ENCODE measurements at regions of chr18 and their contacts with region 1.

Region 1: DNA sequence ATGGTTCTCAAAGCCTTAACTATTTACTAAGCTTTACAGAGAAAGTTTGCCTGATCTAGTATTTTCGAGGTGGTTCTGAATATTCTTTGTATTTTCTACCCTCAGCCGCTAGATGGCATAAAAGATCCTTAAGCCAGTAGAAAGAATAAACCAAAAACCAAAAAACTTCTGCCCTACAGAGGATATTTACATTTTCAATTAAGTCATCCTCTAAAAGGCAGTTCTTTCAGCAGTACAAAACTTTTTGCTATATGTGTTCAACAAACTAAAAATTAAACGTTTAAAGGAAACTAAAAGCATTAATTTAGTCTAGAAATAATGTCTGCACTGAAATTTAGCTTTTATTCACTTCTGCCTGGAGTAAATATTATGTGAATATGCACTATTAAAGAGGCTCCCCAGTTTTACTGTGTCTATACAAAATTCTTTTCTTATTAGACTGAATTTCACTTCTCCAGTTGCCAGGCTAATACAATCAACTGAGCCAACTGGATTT is 297.5 kb downstream of the PIEZO2 start:
- DNase-seq: no peak
- H3K4me3 Mint-ChIP-seq: no peak overlapping the region
- H3K27ac Mint-ChIP-seq: no peak overlapping the region
- H3K4me1 Mint-ChIP-seq: no peaks in the 10 kb centered on the region
- H3K27me3 Mint-ChIP-seq: peaks cover 11% of the 10 kb centered on the region

Region 2: DNA sequence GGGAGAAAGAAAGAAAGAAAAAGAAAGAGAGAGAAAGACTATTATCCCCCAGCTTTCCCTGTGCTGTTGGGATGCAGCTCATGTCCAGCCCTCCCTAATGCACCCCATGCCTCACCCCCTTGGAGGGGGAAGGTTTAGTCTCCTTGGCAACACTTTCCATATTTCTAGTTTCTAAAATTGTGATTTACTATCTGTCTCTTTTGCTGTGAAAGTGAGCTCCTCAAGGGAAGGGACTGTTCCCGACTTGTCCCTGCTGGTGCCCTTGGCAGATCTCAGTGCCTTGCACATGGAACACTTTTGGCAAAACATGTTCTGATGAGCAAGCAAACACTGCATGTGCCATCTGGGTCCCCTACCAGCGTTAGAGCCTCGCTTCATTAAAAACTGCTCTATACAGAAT is 337.8 kb before region 1 on chr18:
- CTCF ChIA-PET with region 1: no interaction called
- POLR2A ChIA-PET with region 1: no interaction called
- intact Hi-C with region 1: no loop called
- DNase-seq: no peak
- H3K4me3 Mint-ChIP-seq: no peak overlapping the region
- H3K27ac Mint-ChIP-seq: no peak overlapping the region
- H3K4me1 Mint-ChIP-seq: no peaks in the 10 kb centered on the region
- H3K27me3 Mint-ChIP-seq: peaks cover 66% of the 10 kb centered on the region

Region 3: GRCh38 chr18:11040823-11041656 is 189.2 kb after region 1 on chr18:
- CTCF ChIA-PET with region 1: interaction called, 17 read pairs
- POLR2A ChIA-PET with region 1: no interaction called
- intact Hi-C with region 1: loop called (anchors 1 kb)
- DNase-seq: peak; percentile 10
- H3K4me3 Mint-ChIP-seq: no peak overlapping the region
- H3K27ac Mint-ChIP-seq: no peak overlapping the region
- H3K4me1 Mint-ChIP-seq: no peaks in the 10 kb centered on the region
- H3K27me3 Mint-ChIP-seq: peaks cover 6% of the 10 kb centered on the region

Region 4: GRCh38 chr18:11149441-11150270 is 297.8 kb after region 1 on chr18 and contains the start of gene PIEZO2:
- CTCF ChIA-PET with region 1: interaction called, 8 read pairs
- POLR2A ChIA-PET with region 1: no interaction called
- intact Hi-C with region 1: loop called (anchors 5 kb)
- DNase-seq: no peak
- H3K4me3 Mint-ChIP-seq: no peak within 1 kb of the TSS
- H3K27ac Mint-ChIP-seq: no peak within 1 kb of the TSS
- H3K4me1 Mint-ChIP-seq: peaks cover 3% of the 10 kb centered on the region
- H3K27me3 Mint-ChIP-seq: peaks cover 32% of the 10 kb centered on the region
- total RNA-seq, gene PIEZO2: not detected

Region 5: DNA sequence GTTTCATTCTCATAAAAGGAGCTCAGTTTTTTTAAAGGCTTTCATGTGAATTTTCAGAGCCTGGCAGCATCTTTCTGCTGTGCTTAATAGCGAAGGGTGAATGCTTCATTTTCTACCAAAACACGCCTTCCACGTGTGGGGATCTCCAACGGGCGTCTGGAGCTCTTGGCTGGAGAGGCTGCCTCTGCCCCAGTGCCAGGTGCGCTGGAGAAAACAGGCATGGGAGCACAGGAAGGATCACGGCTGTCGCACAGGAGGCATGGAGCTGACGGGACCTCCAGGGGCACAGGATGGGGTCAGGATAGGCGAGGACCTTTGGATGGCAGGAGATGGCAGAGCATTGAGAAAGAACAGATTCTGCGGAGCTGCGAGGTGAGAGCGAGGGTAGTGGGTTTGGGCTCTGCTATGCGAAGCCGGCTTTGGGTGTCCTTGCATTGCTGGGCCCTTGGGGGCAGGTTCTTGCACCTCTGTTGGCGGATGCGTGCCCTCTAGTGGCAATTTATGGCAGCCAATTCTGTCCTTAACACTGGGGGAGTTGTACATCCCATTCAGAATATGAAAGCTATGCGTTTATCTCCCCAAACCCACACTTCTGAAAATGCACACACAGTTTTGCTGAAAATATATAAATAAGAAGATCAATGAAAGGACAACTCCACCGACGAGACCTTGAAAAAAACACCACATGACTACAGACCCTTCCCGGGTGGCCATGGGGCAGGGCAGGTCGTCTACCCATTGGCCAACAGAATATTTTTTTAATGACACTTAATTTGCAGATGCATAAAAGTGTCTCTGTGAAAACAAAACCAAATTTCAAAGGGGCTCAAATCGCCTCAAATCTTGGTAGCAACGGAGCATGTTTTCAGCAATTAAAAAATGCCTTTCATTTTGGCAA is 667.2 kb after region 1 on chr18:
- CTCF ChIA-PET with region 1: no interaction called
- POLR2A ChIA-PET with region 1: no interaction called
- intact Hi-C with region 1: loop called (anchors 5 kb)
- DNase-seq: peak; percentile 55
- H3K4me3 Mint-ChIP-seq: no peak overlapping the region
- H3K27ac Mint-ChIP-seq: no peak overlapping the region
- H3K4me1 Mint-ChIP-seq: no peaks in the 10 kb centered on the region
- H3K27me3 Mint-ChIP-seq: no peaks in the 10 kb centered on the region